BJ (cell line): ENCODE measurements at regions of chr3 and their contacts with region 1.

Region 1: DNA sequence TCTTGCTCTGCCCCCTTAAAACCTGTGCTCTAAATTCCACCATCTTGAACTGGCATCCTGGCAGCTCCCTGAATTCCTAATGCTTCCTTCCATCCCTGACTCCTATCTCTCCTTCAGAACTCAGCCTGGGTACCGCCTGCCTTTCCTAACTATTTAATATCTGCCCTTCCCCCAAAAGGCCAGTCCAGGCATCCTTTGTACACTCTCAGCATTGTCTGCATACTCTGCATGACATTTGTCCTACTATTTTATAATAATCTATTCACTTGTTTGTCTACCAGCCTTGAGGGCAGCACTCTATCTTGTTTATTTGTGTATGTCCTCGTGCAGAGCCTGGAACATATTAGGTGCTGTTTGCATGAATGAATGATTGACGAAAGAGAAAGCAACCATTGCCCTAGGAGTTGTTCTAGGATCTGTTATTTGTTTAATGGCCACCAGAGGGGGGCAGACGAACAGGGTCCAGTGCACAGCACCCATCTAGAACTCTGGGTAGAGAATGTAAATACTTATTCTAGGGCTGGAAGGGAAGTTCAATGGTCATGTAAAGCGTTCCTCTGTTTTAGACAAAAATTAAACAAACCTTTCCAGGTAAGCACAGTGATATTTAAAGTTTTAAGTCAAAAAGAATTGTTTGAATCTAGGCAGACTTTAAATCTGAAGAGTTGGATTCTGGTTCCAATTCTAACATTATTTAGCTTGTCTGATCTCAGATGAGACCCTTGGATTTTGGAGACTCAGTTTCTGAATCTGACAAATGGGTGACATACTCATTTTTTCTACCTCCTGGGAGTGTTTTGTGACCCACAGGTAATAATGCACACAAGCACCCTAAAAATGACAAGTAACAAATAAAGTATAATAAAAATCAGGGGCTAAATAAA is 125.8 kb upstream of the GALNT15 start:
- DNase-seq: no peak
- H3K4me3 ChIP-seq: no peak overlapping the region
- H3K27me3 ChIP-seq: no peaks in the 10 kb centered on the region
- CTCF ChIP-seq: peak; percentile 74

Region 2: DNA sequence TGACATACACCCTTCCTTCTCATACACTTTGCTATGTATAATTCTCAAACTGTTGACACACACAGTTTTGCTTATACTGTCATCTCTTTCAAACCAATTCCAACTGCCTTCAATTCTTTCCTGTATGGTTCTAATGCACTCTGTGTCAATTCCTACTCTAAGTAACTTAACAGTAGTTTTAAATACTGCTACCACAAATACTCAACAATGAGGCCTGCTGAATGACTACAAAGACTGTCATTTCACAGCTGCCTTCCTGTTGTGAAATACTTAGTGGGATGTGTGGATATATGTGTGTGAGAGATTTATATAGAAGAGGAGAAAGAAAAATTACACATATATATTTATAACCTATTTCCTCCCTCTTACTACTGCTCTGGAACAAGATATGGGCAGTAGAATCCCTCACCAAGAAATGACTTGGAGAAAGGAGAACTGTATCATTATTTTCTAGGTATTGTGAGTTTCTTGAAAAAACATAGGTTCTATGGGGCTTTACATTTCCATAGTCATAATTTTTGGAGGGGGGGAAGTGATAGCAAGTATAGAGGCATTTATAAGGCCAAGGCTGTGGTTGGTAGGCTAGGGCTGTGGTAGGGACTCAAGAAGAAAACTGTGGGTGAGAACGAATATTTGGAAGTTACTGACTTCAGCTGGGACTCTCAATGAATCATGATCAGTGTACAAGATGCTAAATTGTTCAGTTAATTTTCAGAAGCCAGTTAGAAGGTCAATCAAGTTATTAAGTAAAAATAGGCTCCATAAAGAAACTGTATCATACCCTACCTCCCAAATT is 339.6 kb before region 1 on chr3:
- CTCF ChIA-PET with region 1: no interaction called
- POLR2A ChIA-PET with region 1: no interaction called
- DNase-seq: no peak
- H3K4me3 ChIP-seq: no peak overlapping the region
- H3K27me3 ChIP-seq: no peaks in the 10 kb centered on the region
- CTCF ChIP-seq: no peak

Region 3: DNA sequence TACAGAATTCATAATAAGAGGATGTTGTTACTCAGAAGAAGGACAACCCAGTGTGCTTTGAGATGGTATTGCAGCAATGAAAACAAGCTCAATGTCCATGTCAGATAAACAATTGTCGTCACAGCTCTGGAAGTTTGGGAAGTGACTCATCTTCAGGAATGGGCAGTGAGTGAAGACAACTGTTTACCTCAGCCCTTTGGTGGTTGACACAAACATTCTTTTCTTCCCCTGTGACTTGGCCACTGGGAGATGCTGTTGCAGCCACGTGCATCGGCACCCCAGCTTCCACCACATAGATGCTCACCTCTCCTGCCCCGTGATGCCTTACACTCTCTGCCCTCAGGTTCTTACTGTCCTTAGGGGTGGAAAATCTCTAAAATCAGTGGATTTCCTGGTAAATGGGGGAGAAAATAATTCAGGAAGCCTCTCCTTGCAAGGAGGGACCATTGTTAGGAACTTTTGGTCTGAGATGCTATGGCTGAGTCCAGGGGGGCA is 11.7 kb after region 1 on chr3:
- CTCF ChIA-PET with region 1: interaction called, 25 read pairs
- POLR2A ChIA-PET with region 1: no interaction called
- DNase-seq: peak; percentile 99
- H3K4me3 ChIP-seq: no peak overlapping the region
- H3K27me3 ChIP-seq: no peaks in the 10 kb centered on the region
- CTCF ChIP-seq: peak; percentile 34

Region 4: GRCh38 chr3:16177962-16178627 is 129.4 kb after region 1 on chr3:
- CTCF ChIA-PET with region 1: interaction called, 171 read pairs
- POLR2A ChIA-PET with region 1: interaction called, 3 read pairs
- DNase-seq: peak; percentile 35
- H3K4me3 ChIP-seq: no peak overlapping the region
- H3K27me3 ChIP-seq: no peaks in the 10 kb centered on the region
- CTCF ChIP-seq: peak; percentile 99

Region 5: GRCh38 chr3:16240283-16241023 is 191.8 kb after region 1 on chr3:
- CTCF ChIA-PET with region 1: interaction called, 24 read pairs
- POLR2A ChIA-PET with region 1: no interaction called
- DNase-seq: peak; percentile 42
- H3K4me3 ChIP-seq: no peak overlapping the region
- H3K27me3 ChIP-seq: no peaks in the 10 kb centered on the region
- CTCF ChIP-seq: no peak

Region 6: GRCh38 chr3:16253601-16254000 is 204.9 kb after region 1 on chr3:
- CTCF ChIA-PET with region 1: interaction called, 26 read pairs
- POLR2A ChIA-PET with region 1: no interaction called
- DNase-seq: no peak
- H3K4me3 ChIP-seq: no peak overlapping the region
- H3K27me3 ChIP-seq: no peaks in the 10 kb centered on the region
- CTCF ChIP-seq: no peak

Region 7: DNA sequence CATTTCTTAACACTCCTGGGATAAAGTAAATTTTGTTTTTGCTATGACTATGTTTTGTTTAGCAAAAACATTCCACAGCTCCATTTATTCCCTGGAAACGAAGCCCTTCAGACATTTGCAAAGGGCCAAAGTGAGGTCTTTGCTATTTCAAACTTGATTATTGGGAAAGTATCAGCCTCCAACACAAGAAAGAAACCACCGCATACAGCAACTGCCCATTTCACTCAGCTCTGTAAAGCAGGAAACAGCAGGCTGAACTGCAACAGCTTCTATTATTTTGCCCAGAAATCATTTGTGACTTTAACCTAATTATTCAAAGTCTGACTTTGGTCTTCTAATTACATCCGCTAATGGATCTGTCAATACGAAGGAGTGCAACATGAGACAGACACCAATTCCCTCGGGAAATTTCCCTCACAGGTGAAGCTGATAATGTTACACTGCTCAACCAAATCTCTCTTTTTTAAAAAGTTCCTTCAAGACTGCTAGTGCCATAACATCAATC is 392.7 kb after region 1 on chr3:
- CTCF ChIA-PET with region 1: no interaction called
- POLR2A ChIA-PET with region 1: no interaction called
- DNase-seq: no peak
- H3K4me3 ChIP-seq: no peak overlapping the region
- H3K27me3 ChIP-seq: no peaks in the 10 kb centered on the region
- CTCF ChIP-seq: no peak